Right lobe of liver (tissue), 6 donors: ENCODE measurements at regions of chr12 and their contacts with region 1.

Region 1: GRCh38 chr12:92987362-92987761 is 58.3 kb upstream of the EEA1 start:
- DNase-seq: no peak
- ATAC-seq: peak; percentile 89 to 94 (median 92)
- H3K4me3 ChIP-seq: no peak overlapping the region
- H3K27ac ChIP-seq: peak overlapping the region in 2 of 3 donors; percentile 17 to 47
- H3K4me1 ChIP-seq: peaks cover 0 to 21% (median 10%) of the 10 kb centered on the region in 4 donors
- H3K27me3 ChIP-seq: no peaks in the 10 kb centered on the region
- CTCF ChIP-seq: peak; percentile 54 to 71 (median 62)
- POLR2A ChIP-seq: no peak

Region 2: GRCh38 chr12:93397412-93397811 is 410.1 kb after region 1 on chr12:
- intact Hi-C with region 1: loop called in 1 of 2 experiments (anchors 5 kb)
- DNase-seq: peak in 1 of 3 donors; percentile 63
- ATAC-seq: peak; percentile 48 to 63 (median 56)
- H3K4me3 ChIP-seq: no peak overlapping the region
- H3K27ac ChIP-seq: peak overlapping the region in 2 of 3 donors; percentile 22 to 40
- H3K4me1 ChIP-seq: peaks cover 0 to 25% (median 9%) of the 10 kb centered on the region in 4 donors
- H3K27me3 ChIP-seq: no peaks in the 10 kb centered on the region
- CTCF ChIP-seq: no peak
- POLR2A ChIP-seq: no peak